Activated T-helper 1 cell treated with anti-CD3 and anti-CD28 coated beads, Interleukin-12 subunit alpha, Interleukin-12 subunit beta, Interleukin-2, Interleukin-4 antibody, amounts not matched to agents 30 ng/mL and 10 ng/mL and 1 ng/mL, durations not matched to agents 14 hours and 24 hours and 36 hours (primary cell): ENCODE measurements at regions of chr9 and their contacts with region 1.

Region 1: GRCh38 chr9:120928483-120929228 is 2.1 kb upstream of the TRAF1 start:
- DNase-seq: peak; percentile 82
- H3K4me3 Mint-ChIP-seq: peak overlapping the region; percentile 89
- H3K27ac Mint-ChIP-seq: peak overlapping the region; percentile 96
- H3K4me1 Mint-ChIP-seq: peaks cover 87% of the 10 kb centered on the region
- H3K27me3 Mint-ChIP-seq: no peaks in the 10 kb centered on the region

Region 2: DNA sequence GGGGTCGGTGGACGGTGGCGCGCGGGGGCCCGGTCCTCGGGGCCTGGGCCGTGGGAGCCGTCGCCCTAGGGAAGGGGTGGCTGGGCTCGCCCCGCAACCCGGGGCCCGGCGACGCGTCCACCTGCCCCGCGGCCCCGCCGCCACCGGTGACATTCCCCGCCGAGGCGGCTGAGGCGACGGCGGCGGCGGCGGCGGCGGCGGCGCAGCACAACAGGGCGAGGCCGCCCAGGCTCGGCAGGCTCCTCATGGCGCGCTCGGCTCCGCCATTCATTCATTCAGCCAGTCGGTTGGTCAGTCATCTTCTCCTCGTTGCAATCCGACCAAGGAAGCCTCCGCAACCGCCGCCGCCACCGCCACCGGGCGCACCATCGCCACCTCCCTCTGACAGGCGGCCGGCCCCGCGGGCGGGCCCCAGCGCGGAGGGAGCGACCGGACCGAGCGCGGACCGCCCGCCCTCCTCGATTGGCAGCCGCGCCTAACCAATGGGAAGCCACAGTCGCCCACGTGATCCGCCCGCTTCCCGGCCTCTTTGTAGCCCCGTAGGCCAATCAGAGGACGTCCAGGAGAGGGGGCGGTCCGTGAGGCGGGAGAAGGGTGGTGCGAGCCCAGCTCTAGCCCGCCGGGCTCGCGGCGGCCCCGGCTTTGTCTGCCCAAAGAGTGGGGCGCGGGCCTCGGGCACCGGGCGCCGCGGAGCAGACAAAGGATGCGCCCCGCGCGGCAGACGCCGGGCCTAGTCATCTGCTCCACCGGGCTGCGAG is 214.4 kb before region 1 on chr9 and contains the start of gene MEGF9:
- intact Hi-C with region 1: loop called (anchors 1 kb)
- DNase-seq: peak; percentile 96
- H3K4me3 Mint-ChIP-seq: peak within 1 kb of the TSS; percentile 92
- H3K27ac Mint-ChIP-seq: peak within 1 kb of the TSS; percentile 82
- H3K4me1 Mint-ChIP-seq: peaks cover 41% of the 10 kb centered on the region
- H3K27me3 Mint-ChIP-seq: no peaks in the 10 kb centered on the region
- total RNA-seq, gene MEGF9: 5.4 and 5.9 TPM in 2 replicates

Region 3: DNA sequence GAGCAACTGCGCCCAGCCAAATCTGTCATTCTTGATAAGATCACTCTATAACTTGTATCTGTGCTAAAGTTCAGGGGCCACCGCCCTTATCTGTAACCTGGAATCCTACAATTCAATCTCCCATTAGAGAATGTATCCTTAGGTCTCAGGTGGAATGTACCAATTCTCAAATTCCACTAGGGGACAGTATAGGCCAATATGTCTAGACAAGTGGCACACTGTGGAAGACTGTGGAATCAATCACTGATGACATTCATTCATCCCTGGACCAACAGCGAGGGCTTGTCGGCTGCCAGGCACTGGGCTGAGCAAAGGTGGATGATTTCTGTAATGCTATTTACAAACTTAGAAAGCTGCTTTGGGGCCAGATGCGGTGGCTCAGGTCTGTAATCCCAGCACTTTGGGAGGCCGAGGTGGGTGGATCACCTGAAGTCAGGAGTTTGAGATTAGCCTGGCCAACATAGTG is 185.7 kb before region 1 on chr9:
- intact Hi-C with region 1: no loop called
- DNase-seq: no peak
- H3K4me3 Mint-ChIP-seq: no peak overlapping the region
- H3K27ac Mint-ChIP-seq: no peak overlapping the region
- H3K4me1 Mint-ChIP-seq: no peaks in the 10 kb centered on the region
- H3K27me3 Mint-ChIP-seq: peaks cover 8% of the 10 kb centered on the region

Region 4: DNA sequence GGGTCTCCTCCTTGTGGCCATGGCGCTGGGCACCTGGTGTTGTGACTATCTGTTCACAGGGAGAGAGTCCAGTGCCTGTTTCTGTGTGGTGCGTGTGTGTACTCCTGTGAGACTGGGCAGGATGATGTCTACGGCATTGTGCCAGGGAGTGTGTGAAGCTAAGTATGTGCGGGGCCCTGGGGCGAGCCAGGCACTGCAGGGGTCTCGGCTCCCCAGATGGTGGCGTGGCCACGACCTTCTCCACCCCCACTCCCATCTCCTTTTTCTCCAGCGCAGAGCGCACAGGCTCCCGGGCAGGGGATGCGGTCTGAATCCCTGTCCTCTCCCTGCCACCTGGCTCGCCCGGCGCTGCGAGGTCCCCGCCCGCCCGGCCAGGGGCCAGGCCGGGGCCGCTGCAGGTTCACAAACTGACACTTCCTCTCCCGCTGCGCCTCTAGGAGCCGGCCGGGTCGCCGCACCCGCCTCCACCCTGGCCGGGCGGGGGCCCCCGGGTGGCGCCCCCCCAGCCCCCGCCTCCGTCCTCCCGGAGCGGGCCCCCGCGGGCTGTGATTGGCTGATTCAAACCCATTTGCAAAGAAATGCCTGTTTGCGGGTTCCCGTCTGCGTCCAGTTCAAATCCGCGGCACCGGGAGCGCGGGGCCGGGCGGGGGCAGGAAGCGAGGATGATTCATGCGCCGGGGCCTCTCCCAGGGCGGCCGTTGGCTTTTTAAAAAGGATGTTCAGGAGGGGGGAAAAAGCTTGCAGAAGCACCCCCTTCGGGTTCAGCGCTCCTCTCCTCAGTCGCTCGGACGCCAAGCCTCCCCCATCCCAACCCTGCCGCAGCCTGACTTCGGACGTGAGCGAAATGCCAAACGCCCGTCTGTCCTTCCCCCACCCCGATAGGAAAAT is 52.5 kb before region 1 on chr9:
- intact Hi-C with region 1: loop called (anchors 1 kb)
- DNase-seq: peak; percentile 86
- H3K4me3 Mint-ChIP-seq: peak overlapping the region; percentile 89
- H3K27ac Mint-ChIP-seq: peak overlapping the region; percentile 97
- H3K4me1 Mint-ChIP-seq: peaks cover 75% of the 10 kb centered on the region
- H3K27me3 Mint-ChIP-seq: no peaks in the 10 kb centered on the region

Region 5: GRCh38 chr9:120916588-120916987 is 12.1 kb before region 1 on chr9:
- intact Hi-C with region 1: loop called (anchors 1 kb)
- DNase-seq: no peak
- H3K4me3 Mint-ChIP-seq: peak overlapping the region; percentile 67
- H3K27ac Mint-ChIP-seq: peak overlapping the region; percentile 89
- H3K4me1 Mint-ChIP-seq: peaks cover 91% of the 10 kb centered on the region
- H3K27me3 Mint-ChIP-seq: no peaks in the 10 kb centered on the region

Region 6: DNA sequence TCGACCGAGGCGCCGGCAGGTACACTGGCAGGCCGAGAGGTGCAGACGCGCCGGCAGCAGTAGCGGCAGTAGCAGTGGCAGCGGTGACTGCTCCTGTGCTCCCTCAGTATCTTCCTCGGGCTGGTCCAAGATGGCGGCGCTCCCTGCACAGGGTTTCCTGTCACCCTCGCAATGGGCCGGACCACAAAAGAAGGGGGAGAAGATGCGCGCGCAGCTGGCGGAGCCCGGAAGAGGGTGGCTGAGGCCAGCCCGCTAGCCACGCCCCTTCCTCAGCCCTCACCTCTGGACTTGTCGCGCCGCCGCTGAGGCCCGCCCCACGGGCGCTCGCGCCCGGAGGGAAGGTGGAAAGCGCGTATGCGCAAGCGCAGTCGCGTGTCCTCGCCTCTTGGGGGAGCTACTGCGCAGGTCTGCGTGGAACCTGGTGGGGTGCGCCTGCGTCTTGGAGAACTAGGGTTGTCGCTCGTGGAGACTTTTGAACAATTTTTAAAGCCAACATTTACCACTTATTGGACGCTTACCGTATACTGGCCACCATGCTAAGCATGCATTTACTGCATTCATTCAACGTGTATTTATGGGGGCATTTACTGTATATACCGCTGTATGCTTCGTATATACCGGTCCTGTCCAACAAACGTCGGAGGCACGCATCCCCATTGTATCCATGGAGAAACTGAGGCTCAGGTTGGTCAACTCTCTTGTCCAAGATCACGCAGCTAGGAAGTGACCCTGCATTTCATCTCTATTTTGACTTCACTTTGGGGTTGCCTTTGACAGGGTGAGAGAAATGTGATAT is 273.3 kb after region 1 on chr9 and contains the start of gene RAB14:
- intact Hi-C with region 1: loop called (anchors 5 kb)
- DNase-seq: peak; percentile 100
- H3K4me3 Mint-ChIP-seq: peak within 1 kb of the TSS; percentile 96
- H3K27ac Mint-ChIP-seq: peak within 1 kb of the TSS; percentile 92
- H3K4me1 Mint-ChIP-seq: peaks cover 61% of the 10 kb centered on the region
- H3K27me3 Mint-ChIP-seq: no peaks in the 10 kb centered on the region
- total RNA-seq, gene RAB14: 64.8 and 69.3 TPM in 2 replicates